Psoas muscle (tissue), 8 donors: ENCODE measurements at regions of chr3 and their contacts with region 1.

Region 1: DNA sequence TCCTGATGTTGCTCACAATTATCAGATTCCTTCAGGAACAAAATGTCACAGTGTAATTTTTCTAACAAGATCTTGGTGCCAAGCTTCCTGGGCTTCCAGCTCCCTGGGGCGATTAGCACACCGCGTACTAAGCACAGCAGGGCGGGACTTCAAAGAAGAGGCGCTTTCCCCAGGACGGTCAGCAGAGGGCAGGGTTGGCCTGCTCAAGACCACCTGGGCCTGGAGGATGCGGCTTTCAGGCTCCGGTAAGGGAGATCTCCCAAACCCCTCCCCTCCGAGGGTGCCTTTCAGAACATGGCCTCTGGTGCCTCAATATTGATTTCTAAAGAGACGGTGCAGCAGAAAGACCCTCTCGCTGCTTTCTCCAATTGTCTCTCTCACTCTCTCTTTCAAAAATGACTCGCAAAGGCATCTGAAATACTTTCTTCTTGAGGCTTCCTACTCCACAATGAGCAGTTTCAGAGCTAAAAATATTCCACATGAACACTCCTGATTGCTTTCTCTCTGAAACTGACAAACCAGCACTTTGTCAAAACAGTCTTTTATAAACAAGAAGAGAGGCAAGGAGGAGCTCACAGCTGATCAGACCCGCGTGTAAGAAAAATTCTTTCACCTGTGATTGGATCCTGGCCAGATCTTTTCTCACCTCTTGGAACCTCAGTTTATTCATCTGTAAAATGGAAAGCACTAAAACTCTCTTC is 154.0 kb downstream of the ADAMTS9 start:
- DNase-seq: peak; percentile 82 to 93
- ATAC-seq: peak; percentile 97 to 98 (median 98)
- H3K4me3 ChIP-seq: peak overlapping the region; percentile 13
- H3K27ac ChIP-seq: no peak overlapping the region
- H3K4me1 ChIP-seq: no peaks in the 10 kb centered on the region
- H3K27me3 ChIP-seq: no peaks in the 10 kb centered on the region
- CTCF ChIP-seq: peak; percentile 90

Region 2: DNA sequence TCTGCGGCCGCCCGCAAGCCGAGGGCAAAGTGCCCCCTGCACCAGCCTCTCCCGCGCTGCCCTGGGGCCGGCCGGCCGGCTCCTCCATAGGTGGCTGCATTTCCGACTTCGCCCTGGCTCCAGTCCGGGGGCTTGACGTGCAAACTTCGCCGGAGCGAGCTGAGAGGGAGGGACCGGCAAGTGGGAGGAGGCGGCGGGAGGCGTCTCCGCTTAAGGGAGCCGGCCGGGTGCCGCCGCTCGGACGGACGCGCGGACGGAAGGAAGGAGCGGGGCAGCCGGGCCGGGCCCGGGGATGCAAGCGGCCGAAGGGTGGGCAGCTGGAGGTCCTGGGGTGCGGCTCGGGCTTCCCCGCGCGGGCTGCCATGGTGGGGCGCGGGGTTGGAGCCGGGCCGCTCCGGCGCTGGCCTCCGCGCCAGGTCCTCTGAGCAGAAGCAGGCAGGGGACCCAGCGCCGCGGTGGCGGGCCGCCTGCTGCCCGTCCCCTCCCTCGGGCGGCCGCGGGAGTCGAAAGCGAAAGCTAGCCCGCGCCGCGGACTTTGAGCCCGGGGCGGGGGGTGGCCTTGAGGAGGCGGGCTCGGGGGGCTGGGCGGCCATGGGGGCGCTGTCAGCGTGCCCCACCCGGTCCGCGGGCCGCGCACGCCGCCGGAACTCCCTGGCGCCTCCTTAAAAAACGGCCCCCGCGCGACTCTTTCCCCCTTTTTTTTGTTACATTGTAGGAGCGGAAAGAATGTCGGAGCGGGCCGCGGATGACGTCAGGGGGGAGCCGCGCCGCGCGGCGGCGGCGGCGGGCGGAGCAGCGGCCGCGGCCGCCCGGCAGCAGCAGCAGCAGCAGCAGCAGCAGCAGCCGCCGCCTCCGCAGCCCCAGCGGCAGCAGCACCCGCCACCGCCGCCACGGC is 621.6 kb before region 1 on chr3 and contains the start of gene SCAANT1:
- intact Hi-C with region 1: no loop called
- DNase-seq: peak; percentile 92 to 96
- ATAC-seq: peak; percentile 91 to 93 (median 92)
- H3K4me3 ChIP-seq: peak within 1 kb of the TSS; percentile 85
- H3K27ac ChIP-seq: peak within 1 kb of the TSS; percentile 99
- H3K4me1 ChIP-seq: peaks cover 18% of the 10 kb centered on the region
- H3K27me3 ChIP-seq: no peaks in the 10 kb centered on the region
- CTCF ChIP-seq: no peak
- total RNA-seq, gene SCAANT1: not detected

Region 3: DNA sequence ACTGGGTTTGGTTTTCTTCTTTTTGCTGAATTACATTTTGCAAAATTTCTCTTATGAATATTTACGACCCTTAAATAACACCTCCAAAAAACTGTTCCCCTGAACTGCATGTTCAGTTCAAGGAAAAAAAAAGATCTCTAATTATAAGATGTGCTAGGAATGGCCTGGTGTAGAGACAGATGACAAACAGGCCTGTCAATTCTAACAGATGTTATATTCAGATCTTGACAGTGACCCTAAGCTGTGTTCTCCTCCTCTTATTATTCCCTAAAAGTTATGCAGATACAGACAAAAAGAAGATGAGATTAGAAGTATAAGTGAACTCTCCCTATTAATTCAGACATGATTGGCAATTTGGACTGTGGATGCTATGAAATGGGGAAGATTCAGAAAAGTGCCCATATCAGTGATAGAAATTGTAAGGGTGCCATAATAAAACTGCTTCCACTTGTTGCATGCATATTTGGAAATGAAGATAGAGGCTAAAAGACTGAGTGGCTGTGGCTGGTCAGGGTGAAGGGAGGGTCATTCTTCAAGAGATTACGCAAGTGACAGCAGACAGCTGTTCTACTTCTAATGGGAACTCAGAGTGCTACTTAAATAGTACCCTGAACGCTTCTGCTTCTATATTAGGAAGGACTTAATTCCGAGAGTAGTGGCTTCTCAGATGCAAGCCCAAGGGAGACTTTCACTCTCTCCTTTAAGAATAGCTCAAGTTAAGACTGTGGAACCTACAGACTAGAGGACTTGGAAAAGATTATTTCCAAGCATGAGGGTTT is 78.5 kb after region 1 on chr3:
- intact Hi-C with region 1: loop called in 1 of 2 experiments (anchors 5 kb)
- DNase-seq: no peak
- ATAC-seq: peak; percentile 93 to 98 (median 97)
- H3K4me3 ChIP-seq: peak overlapping the region; percentile 52
- H3K27ac ChIP-seq: peak overlapping the region; percentile 85
- H3K4me1 ChIP-seq: peaks cover 48% of the 10 kb centered on the region
- H3K27me3 ChIP-seq: no peaks in the 10 kb centered on the region
- CTCF ChIP-seq: no peak

Region 4: GRCh38 chr3:65080432-65080831 is 546.7 kb after region 1 on chr3:
- intact Hi-C with region 1: loop called in 1 of 2 experiments (anchors 5 kb)
- DNase-seq: peak in 1 of 2 donors; percentile 46
- ATAC-seq: peak; percentile 53 to 84 (median 68)
- H3K4me3 ChIP-seq: no peak overlapping the region
- H3K27ac ChIP-seq: no peak overlapping the region
- H3K4me1 ChIP-seq: no peaks in the 10 kb centered on the region
- H3K27me3 ChIP-seq: no peaks in the 10 kb centered on the region
- CTCF ChIP-seq: peak; percentile 18

Region 5: DNA sequence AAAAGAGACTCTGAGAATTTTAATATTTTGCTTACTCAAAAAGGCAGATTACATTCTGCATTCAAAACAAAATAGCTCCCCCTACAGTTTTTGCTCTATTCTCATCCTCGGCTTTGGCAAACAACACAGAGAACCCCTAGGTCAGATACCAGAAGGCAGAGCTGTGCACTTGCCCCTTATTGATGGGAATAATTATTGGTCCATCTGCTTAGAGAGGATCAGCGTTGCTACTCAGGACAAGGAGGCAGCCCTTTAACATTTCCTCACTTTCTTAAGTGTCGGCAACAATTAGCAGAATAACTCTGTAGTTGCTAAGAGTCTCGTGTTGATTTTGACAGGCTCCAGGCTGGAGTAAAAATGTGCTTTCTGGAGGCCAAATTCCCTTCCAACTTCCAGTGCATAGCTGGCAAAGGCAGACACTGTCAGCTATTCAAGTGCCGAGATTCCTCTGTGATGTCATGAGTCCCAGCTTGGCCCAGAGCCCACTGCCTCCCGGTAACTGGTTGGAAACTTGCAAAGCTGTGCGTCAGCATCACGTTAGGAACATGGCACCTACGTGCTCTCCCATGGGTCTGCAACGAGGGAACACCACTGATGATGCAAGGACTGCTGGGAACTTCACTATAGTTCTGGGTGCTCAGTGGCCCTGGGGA is 636.7 kb after region 1 on chr3:
- intact Hi-C with region 1: loop called in 1 of 2 experiments (anchors 5 kb)
- DNase-seq: peak; percentile 84 to 92
- ATAC-seq: peak; percentile 49 to 92 (median 78)
- H3K4me3 ChIP-seq: no peak overlapping the region
- H3K27ac ChIP-seq: peak overlapping the region; percentile 59
- H3K4me1 ChIP-seq: no peaks in the 10 kb centered on the region
- H3K27me3 ChIP-seq: no peaks in the 10 kb centered on the region
- CTCF ChIP-seq: peak; percentile 47

Region 6: DNA sequence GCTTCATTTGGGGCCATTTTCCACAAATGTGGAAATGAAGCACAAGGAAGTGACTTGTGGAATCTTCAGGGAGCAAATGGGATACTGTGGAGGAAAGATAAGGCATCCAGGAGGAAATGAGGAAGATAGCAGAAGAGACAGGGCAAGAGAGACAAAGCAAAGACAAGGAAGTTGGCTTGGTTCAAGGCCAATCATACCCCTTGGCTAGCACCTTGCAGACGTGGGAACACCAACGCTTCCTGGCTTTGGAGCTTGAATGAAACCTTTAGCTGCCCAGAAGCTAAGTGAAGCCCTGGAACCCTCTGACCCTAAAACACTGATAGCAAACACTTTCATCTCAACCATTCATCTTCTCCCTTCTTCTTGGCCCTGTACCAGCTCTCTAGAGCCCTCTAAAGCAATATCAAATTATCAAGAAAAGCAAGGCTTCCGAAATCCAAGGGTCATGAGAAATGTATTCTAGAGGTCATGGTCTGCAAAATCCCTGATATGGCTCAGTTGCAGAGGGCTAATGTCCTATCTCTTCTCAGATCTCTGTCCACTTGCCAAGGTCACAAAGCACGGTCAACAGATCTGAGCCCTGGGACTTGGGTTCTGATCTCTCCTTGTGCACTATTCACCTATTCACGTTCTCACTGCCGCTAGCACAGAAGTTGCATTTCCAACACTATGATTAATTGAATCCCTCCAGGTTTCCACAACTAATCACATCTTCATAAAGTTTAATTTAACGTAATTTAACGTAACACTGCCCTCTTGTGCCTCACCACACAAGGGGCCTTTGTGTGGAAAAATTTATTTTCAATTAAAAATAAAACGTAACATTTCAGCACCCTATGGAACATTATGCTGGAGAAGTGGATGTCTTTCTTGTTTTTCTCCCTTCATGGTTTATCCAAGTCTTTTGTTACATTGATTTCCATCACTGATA is 711.6 kb after region 1 on chr3:
- intact Hi-C with region 1: loop called (anchors 5 kb)
- DNase-seq: no peak
- ATAC-seq: no peak
- H3K4me3 ChIP-seq: no peak overlapping the region
- H3K27ac ChIP-seq: no peak overlapping the region
- H3K4me1 ChIP-seq: no peaks in the 10 kb centered on the region
- H3K27me3 ChIP-seq: no peaks in the 10 kb centered on the region
- CTCF ChIP-seq: peak; percentile 37

Region 7: DNA sequence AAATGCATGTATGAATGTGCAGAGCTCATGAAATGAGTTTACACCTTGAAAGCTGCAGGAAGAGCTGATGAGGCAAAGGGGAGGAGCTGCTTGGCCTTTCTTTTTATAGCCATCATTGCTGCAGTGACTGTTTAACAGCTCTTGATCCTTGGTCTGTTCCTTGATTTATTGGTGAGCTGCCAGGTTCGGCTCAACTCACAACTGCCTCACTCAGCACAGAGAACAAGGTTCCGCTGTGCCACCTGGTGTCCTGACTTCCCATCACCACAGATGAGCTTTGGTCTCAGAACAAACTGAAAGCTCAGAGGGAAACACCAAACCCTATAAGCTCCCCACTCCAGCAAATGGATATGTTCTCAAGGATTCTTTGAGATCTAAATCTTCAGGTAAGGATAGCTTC is 878.8 kb after region 1 on chr3:
- intact Hi-C with region 1: loop called in 1 of 2 experiments (anchors 2 kb)
- DNase-seq: peak; percentile 25 to 69
- ATAC-seq: peak; percentile 87 to 99 (median 94)
- H3K4me3 ChIP-seq: no peak overlapping the region
- H3K27ac ChIP-seq: no peak overlapping the region
- H3K4me1 ChIP-seq: peaks cover 12% of the 10 kb centered on the region
- H3K27me3 ChIP-seq: no peaks in the 10 kb centered on the region
- CTCF ChIP-seq: peak; percentile 41